CD4-positive, alpha-beta memory T cell (primary cell): ENCODE measurements at regions of chr1 and their contacts with region 1.

Region 1: DNA sequence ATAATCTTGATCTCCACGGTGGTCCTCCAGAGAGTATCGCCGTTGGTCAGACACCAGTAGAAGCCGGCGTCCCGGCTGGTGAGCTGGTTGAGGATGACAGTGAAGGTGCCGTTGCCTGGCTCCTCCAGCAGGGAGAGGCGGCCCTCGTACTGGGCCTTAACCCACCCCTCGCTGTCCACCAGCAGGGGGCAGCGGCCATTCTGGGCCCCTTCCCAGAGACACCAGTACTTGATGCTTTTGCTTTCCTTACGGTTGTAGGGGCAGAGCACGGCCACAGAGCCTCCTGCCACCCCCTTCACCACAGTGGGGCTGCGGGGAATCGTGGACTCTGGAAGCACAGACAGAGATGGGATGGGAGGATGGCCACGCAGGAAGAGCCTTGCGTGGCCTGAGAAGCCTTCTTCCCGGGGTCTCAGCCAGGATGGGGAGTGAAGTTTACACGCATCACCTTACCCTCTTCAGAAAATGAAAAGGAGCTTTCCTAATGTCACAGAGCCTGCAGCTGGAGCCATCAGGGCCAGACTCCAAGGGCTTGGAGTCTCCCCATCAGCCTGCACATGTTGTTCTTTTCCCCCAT is 10.7 kb downstream of the PIGR start:
- DNase-seq: peak in 1 of 5 donors; percentile 30
- H3K4me3 ChIP-seq: no peak overlapping the region
- H3K4me3 Mint-ChIP-seq: no peak overlapping the region
- H3K27ac ChIP-seq: no peak overlapping the region
- H3K27ac Mint-ChIP-seq: no peak overlapping the region
- H3K4me1 ChIP-seq: peaks cover 14% of the 10 kb centered on the region
- H3K4me1 Mint-ChIP-seq: peaks cover 9 to 25% (median 19%) of the 10 kb centered on the region in 4 donors
- H3K27me3 ChIP-seq: no peaks in the 10 kb centered on the region
- H3K27me3 Mint-ChIP-seq: no peaks in the 10 kb centered on the region

Region 2: DNA sequence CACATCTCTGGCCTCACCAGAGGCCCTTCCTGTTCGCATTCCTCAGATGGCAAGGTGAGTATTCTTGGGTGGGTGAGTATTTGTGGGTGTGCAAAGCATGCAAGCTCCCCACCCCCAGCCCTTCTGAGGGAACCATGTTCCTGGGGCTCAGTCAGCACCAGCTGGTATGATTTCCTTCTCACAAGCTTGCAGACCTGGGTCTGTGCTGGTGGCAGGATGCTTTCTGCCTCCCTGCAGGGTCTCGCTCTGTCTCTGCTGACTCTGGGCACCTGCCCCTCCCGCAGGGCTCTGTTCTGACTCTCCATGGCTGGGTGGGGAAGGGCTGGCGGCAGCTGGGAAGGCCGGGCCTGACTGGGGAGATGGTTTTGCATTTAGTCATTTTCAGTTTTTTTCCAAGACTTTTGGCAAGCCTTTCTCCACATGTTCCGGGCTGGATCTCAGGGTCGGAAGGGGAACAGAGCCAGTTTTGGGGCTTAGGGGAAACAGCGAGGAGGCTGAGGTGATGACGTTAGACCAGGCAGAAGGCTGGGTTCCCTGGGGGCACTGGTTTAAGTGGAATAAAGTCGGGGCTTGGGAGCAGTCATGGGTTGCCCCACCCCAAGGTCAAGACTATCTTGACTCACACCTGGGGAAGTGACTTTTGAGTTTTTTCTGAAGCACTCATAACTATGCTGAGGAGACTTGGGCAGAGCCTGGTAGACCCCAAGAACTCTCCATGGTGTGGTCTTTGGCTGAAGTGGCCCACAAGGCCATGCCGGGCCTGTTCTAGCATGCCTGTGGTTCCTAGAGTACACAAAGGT is 422.1 kb before region 1 on chr1:
- CTCF ChIA-PET with region 1: no interaction called
- POLR2A ChIA-PET with region 1: no interaction called
- intact Hi-C with region 1: no loop called
- DNase-seq: no peak
- H3K4me3 ChIP-seq: no peak overlapping the region
- H3K4me3 Mint-ChIP-seq: no peak overlapping the region
- H3K27ac ChIP-seq: no peak overlapping the region
- H3K27ac Mint-ChIP-seq: peak overlapping the region in 2 of 7 donors; percentile 5 to 19
- H3K4me1 ChIP-seq: peaks cover 3% of the 10 kb centered on the region
- H3K4me1 Mint-ChIP-seq: peaks cover 0 to 7% (median 4%) of the 10 kb centered on the region in 4 donors
- H3K27me3 ChIP-seq: no peaks in the 10 kb centered on the region
- H3K27me3 Mint-ChIP-seq: peaks cover 6 to 7% of the 10 kb centered on the region in 2 donors

Region 3: GRCh38 chr1:206808615-206809014 is 127.0 kb before region 1 on chr1:
- CTCF ChIA-PET with region 1: interaction called, 92 read pairs
- POLR2A ChIA-PET with region 1: interaction called, 5 read pairs
- intact Hi-C with region 1: loop called (anchors 1 kb)
- DNase-seq: peak; percentile 61 to 68 (median 63)
- H3K4me3 ChIP-seq: no peak overlapping the region
- H3K4me3 Mint-ChIP-seq: no peak overlapping the region
- H3K27ac ChIP-seq: no peak overlapping the region
- H3K27ac Mint-ChIP-seq: peak overlapping the region in 6 of 7 donors; percentile 20 to 90 (median 83)
- H3K4me1 ChIP-seq: peaks cover 35% of the 10 kb centered on the region
- H3K4me1 Mint-ChIP-seq: peaks cover 24 to 56% (median 43%) of the 10 kb centered on the region in 4 donors
- H3K27me3 ChIP-seq: no peaks in the 10 kb centered on the region
- H3K27me3 Mint-ChIP-seq: no peaks in the 10 kb centered on the region

Region 4: DNA sequence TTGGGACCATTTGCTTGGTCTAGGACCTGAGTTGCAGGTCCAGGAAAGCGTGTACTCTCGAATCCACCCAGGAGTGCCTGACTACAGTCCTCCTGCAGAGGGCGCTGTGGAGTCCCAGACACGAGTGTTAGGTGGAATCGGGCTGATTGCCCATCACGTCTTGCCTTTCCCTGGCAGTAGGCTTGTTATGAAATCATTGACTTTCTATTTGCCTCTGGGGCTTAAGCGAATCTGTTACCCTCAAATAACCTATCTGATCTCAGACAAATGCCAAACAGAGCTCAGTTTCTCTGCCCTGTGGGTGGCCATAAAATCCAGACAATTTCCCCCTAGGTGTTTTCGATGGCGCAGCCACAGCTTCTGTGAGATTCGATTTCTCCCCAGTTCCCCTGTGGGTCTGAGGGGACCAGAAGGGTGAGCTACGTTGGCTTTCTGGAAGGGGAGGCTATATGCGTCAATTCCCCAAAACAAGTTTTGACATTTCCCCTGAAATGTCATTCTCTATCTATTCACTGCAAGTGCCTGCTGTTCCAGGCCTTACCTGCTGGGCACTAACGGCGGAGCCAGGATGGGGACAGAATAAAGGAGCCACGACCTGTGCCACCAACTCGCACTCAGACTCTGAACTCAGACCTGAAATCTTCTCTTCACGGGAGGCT is 70.4 kb before region 1 on chr1 and contains the start of gene IL20:
- CTCF ChIA-PET with region 1: interaction called, 34 read pairs
- POLR2A ChIA-PET with region 1: no interaction called
- intact Hi-C with region 1: loop called (anchors 1 kb)
- DNase-seq: peak; percentile 73 to 79 (median 77)
- H3K4me3 ChIP-seq: no peak within 1 kb of the TSS
- H3K4me3 Mint-ChIP-seq: peak within 1 kb of the TSS in 1 of 8 donors; percentile 6
- H3K27ac ChIP-seq: no peak within 1 kb of the TSS
- H3K27ac Mint-ChIP-seq: peak within 1 kb of the TSS in 2 of 7 donors; percentile 15 to 55
- H3K4me1 ChIP-seq: no peaks in the 10 kb centered on the region
- H3K4me1 Mint-ChIP-seq: peaks cover 0 to 5% (median 4%) of the 10 kb centered on the region in 4 donors
- H3K27me3 ChIP-seq: no peaks in the 10 kb centered on the region
- H3K27me3 Mint-ChIP-seq: peaks cover 16% of the 10 kb centered on the region in 2 donors
- total RNA-seq, gene IL20: not detected

Region 5: GRCh38 chr1:206887701-206888100 is 47.9 kb before region 1 on chr1:
- CTCF ChIA-PET with region 1: interaction called, 10 read pairs
- POLR2A ChIA-PET with region 1: no interaction called
- intact Hi-C with region 1: no loop called
- DNase-seq: no peak
- H3K4me3 ChIP-seq: no peak overlapping the region
- H3K4me3 Mint-ChIP-seq: no peak overlapping the region
- H3K27ac ChIP-seq: no peak overlapping the region
- H3K27ac Mint-ChIP-seq: no peak overlapping the region
- H3K4me1 ChIP-seq: peaks cover 16% of the 10 kb centered on the region
- H3K4me1 Mint-ChIP-seq: peaks cover 13 to 35% (median 21%) of the 10 kb centered on the region in 4 donors
- H3K27me3 ChIP-seq: no peaks in the 10 kb centered on the region
- H3K27me3 Mint-ChIP-seq: peaks cover 5% of the 10 kb centered on the region in 2 donors

Region 6: GRCh38 chr1:206905280-206906164 is 30.1 kb before region 1 on chr1:
- CTCF ChIA-PET with region 1: interaction called, 66 read pairs
- POLR2A ChIA-PET with region 1: interaction called, 21 read pairs
- intact Hi-C with region 1: no loop called
- DNase-seq: no peak
- H3K4me3 ChIP-seq: no peak overlapping the region
- H3K4me3 Mint-ChIP-seq: peak overlapping the region; percentile 49 to 80 (median 69)
- H3K27ac ChIP-seq: peak overlapping the region; percentile 31
- H3K27ac Mint-ChIP-seq: peak overlapping the region; percentile 67 to 95 (median 85)
- H3K4me1 ChIP-seq: peaks cover 60% of the 10 kb centered on the region
- H3K4me1 Mint-ChIP-seq: peaks cover 45 to 78% (median 60%) of the 10 kb centered on the region in 4 donors
- H3K27me3 ChIP-seq: no peaks in the 10 kb centered on the region
- H3K27me3 Mint-ChIP-seq: no peaks in the 10 kb centered on the region

Region 7: GRCh38 chr1:206954459-206955342 is 19.1 kb after region 1 on chr1:
- CTCF ChIA-PET with region 1: interaction called, 62 read pairs
- POLR2A ChIA-PET with region 1: no interaction called
- intact Hi-C with region 1: no loop called
- DNase-seq: no peak
- H3K4me3 ChIP-seq: no peak overlapping the region
- H3K4me3 Mint-ChIP-seq: no peak overlapping the region
- H3K27ac ChIP-seq: no peak overlapping the region
- H3K27ac Mint-ChIP-seq: peak overlapping the region in 3 of 7 donors; percentile 26 to 58 (median 44)
- H3K4me1 ChIP-seq: no peaks in the 10 kb centered on the region
- H3K4me1 Mint-ChIP-seq: peaks cover 0 to 4% (median 0%) of the 10 kb centered on the region in 4 donors
- H3K27me3 ChIP-seq: no peaks in the 10 kb centered on the region
- H3K27me3 Mint-ChIP-seq: no peaks in the 10 kb centered on the region

Region 8: DNA sequence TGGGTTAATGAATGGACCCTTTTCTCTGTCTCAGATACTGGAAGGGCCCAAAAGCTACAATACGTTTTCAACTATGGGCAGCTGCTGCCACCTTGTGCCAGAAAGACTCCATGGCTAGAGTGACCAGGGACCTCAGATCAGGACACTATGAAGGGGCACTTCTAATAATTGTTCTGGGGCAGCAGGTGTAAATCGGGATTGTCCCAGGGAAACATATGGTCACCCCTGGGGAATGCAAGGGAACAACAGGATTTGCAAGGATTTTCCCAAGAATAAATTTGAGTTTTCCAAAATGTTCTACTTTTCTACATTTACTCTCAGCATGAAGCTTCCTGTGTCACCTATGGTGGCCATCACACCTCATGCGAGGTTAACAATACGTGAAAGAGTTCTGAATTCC is 46.6 kb after region 1 on chr1:
- CTCF ChIA-PET with region 1: interaction called, 96 read pairs
- POLR2A ChIA-PET with region 1: no interaction called
- intact Hi-C with region 1: loop called (anchors 5 kb)
- DNase-seq: peak; percentile 50 to 60 (median 53)
- H3K4me3 ChIP-seq: no peak overlapping the region
- H3K4me3 Mint-ChIP-seq: no peak overlapping the region
- H3K27ac ChIP-seq: no peak overlapping the region
- H3K27ac Mint-ChIP-seq: no peak overlapping the region
- H3K4me1 ChIP-seq: no peaks in the 10 kb centered on the region
- H3K4me1 Mint-ChIP-seq: no peaks in the 10 kb centered on the region
- H3K27me3 ChIP-seq: no peaks in the 10 kb centered on the region
- H3K27me3 Mint-ChIP-seq: peaks cover 12 to 17% of the 10 kb centered on the region in 2 donors

Region 9: GRCh38 chr1:207097871-207098324 is 162.3 kb after region 1 on chr1:
- CTCF ChIA-PET with region 1: no interaction called
- POLR2A ChIA-PET with region 1: no interaction called
- intact Hi-C with region 1: no loop called
- DNase-seq: no peak
- H3K4me3 ChIP-seq: no peak overlapping the region
- H3K4me3 Mint-ChIP-seq: no peak overlapping the region
- H3K27ac ChIP-seq: no peak overlapping the region
- H3K27ac Mint-ChIP-seq: no peak overlapping the region
- H3K4me1 ChIP-seq: no peaks in the 10 kb centered on the region
- H3K4me1 Mint-ChIP-seq: no peaks in the 10 kb centered on the region
- H3K27me3 ChIP-seq: no peaks in the 10 kb centered on the region
- H3K27me3 Mint-ChIP-seq: peaks cover 13% of the 10 kb centered on the region in 2 donors